ENCODE measurements at regions of chr6 and their contacts with region 1.

Region 1: GRCh38 chr6:143427109-143427817 is 23.2 kb downstream of the ADAT2 start:
- DNase-seq: peak; percentile 39 to 82 (median 72)
- ATAC-seq: peak; percentile 96 to 100 (median 99)
- H3K4me3 ChIP-seq: no peak overlapping the region
- H3K4me3 Mint-ChIP-seq: no peak overlapping the region
- H3K27ac ChIP-seq: no peak overlapping the region
- H3K27ac Mint-ChIP-seq: no peak overlapping the region
- H3K4me1 ChIP-seq: no peaks in the 10 kb centered on the region
- H3K4me1 Mint-ChIP-seq: peaks cover 2 to 5% (median 3%) of the 10 kb centered on the region in 3 donors
- H3K27me3 ChIP-seq: no peaks in the 10 kb centered on the region
- H3K27me3 Mint-ChIP-seq: no peaks in the 10 kb centered on the region

Region 2: DNA sequence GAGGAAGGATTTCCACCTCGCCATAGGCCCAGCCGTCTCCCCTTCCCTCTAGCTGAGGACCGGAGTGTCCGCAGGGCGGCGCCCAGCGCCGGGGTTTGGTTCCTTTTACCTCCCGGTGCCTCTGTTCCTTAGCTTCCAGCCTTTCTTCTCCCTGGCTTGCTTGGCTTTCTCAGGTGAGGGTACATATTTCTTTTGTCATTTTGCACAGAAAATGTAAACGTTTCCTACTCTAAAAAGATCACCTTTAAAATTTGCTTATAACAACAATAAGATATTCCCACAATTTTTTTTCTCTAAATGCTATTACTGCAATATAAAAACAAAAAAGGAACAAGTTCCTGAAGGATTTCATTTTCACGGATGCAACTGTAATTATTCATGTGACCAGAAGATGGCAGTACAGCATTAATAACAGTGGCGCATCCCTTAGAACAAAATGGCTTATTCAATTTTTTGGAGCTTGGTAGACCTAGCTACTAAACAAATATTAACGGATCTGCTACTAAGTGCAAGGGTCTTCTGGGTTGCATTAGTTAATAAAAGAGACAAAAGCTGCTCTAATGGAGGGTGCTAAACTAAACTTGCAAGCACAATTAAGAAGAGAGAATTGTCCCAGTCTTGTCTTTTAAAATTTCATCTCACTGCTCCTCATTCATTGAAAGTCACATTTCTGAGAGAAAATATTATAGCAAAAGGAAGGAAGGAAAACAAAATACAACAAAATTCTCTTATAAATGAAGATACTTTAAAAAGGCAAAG is 952.6 kb before region 1 on chr6:
- CTCF ChIA-PET with region 1: interaction called, 17 to 37 read pairs
- POLR2A ChIA-PET with region 1: no interaction called
- DNase-seq: peak in 2 of 35 experiments; percentile 15 to 72
- ATAC-seq: no peak
- H3K4me3 ChIP-seq: no peak overlapping the region
- H3K4me3 Mint-ChIP-seq: no peak overlapping the region
- H3K27ac ChIP-seq: no peak overlapping the region
- H3K27ac Mint-ChIP-seq: no peak overlapping the region
- H3K4me1 ChIP-seq: no peaks in the 10 kb centered on the region
- H3K4me1 Mint-ChIP-seq: peaks cover 5 to 8% (median 8%) of the 10 kb centered on the region in 3 donors
- H3K27me3 ChIP-seq: peaks cover 0 to 2% of the 10 kb centered on the region in 2 experiments
- H3K27me3 Mint-ChIP-seq: peaks cover 0 to 5% of the 10 kb centered on the region in 2 donors

Region 3: GRCh38 chr6:142692942-142693341 is 734.3 kb before region 1 on chr6:
- CTCF ChIA-PET with region 1: interaction called, 11 to 15 read pairs
- POLR2A ChIA-PET with region 1: interaction called in 1 of 2 experiments, 6 read pairs
- DNase-seq: peak; percentile 15 to 82 (median 58)
- ATAC-seq: peak; percentile 72 to 81 (median 78)
- H3K4me3 ChIP-seq: no peak overlapping the region
- H3K4me3 Mint-ChIP-seq: peak overlapping the region in 1 of 3 donors; percentile 2
- H3K27ac ChIP-seq: no peak overlapping the region
- H3K27ac Mint-ChIP-seq: no peak overlapping the region
- H3K4me1 ChIP-seq: peaks cover 4 to 14% of the 10 kb centered on the region in 2 experiments
- H3K4me1 Mint-ChIP-seq: peaks cover 16 to 21% (median 16%) of the 10 kb centered on the region in 3 donors
- H3K27me3 ChIP-seq: no peaks in the 10 kb centered on the region
- H3K27me3 Mint-ChIP-seq: no peaks in the 10 kb centered on the region

Region 4: DNA sequence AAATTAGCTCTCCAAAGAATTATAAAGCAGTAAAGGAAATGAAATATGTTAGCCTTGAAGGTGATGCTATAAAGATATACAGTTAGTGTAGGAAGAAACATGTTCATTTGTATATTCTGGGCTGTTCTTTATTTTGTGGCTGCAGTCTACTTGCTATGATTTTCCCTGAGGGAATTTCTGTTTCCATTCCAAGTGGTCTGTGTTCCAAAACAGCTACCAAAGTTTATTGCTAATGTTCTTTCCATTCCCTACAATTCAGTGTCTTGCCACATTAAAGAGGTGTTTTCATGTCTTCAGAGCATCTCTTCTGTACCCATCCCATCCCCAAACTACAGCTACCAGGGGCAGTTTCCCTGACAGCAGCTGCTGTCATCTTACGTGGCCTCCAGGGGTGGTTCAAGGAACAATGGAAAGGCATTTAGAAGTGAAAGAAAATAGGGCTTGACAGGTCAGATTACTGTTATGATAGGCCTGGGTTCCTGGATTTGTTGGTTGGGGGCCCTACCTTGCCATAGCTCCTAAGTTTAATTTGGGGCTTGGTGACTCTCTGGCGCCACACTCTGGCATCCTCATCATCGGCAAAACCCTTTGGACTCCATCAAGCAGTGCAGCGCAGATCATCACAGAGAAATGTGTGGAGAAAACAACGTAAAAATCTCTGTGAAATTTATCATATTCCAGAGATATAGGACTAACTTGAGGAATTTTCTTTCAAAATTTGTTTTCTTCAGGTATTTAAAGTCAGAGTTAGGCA is 400.4 kb before region 1 on chr6:
- CTCF ChIA-PET with region 1: interaction called in 1 of 2 experiments, 12 read pairs
- POLR2A ChIA-PET with region 1: no interaction called
- DNase-seq: peak in 32 of 35 experiments; percentile 10 to 70 (median 40)
- ATAC-seq: peak in 3 of 4 experiments; percentile 51 to 62 (median 59)
- H3K4me3 ChIP-seq: no peak overlapping the region
- H3K4me3 Mint-ChIP-seq: no peak overlapping the region
- H3K27ac ChIP-seq: no peak overlapping the region
- H3K27ac Mint-ChIP-seq: peak overlapping the region in 1 of 2 donors; percentile 50
- H3K4me1 ChIP-seq: no peaks in the 10 kb centered on the region
- H3K4me1 Mint-ChIP-seq: peaks cover 0 to 4% (median 0%) of the 10 kb centered on the region in 3 donors
- H3K27me3 ChIP-seq: no peaks in the 10 kb centered on the region
- H3K27me3 Mint-ChIP-seq: peaks cover 0 to 3% of the 10 kb centered on the region in 2 donors

Region 5: GRCh38 chr6:143390278-143390677 is 37.0 kb before region 1 on chr6:
- CTCF ChIA-PET with region 1: no interaction called
- POLR2A ChIA-PET with region 1: no interaction called
- DNase-seq: no peak
- ATAC-seq: no peak
- H3K4me3 ChIP-seq: no peak overlapping the region
- H3K4me3 Mint-ChIP-seq: no peak overlapping the region
- H3K27ac ChIP-seq: no peak overlapping the region
- H3K27ac Mint-ChIP-seq: no peak overlapping the region
- H3K4me1 ChIP-seq: no peaks in the 10 kb centered on the region
- H3K4me1 Mint-ChIP-seq: no peaks in the 10 kb centered on the region
- H3K27me3 ChIP-seq: no peaks in the 10 kb centered on the region
- H3K27me3 Mint-ChIP-seq: no peaks in the 10 kb centered on the region

Region 6: DNA sequence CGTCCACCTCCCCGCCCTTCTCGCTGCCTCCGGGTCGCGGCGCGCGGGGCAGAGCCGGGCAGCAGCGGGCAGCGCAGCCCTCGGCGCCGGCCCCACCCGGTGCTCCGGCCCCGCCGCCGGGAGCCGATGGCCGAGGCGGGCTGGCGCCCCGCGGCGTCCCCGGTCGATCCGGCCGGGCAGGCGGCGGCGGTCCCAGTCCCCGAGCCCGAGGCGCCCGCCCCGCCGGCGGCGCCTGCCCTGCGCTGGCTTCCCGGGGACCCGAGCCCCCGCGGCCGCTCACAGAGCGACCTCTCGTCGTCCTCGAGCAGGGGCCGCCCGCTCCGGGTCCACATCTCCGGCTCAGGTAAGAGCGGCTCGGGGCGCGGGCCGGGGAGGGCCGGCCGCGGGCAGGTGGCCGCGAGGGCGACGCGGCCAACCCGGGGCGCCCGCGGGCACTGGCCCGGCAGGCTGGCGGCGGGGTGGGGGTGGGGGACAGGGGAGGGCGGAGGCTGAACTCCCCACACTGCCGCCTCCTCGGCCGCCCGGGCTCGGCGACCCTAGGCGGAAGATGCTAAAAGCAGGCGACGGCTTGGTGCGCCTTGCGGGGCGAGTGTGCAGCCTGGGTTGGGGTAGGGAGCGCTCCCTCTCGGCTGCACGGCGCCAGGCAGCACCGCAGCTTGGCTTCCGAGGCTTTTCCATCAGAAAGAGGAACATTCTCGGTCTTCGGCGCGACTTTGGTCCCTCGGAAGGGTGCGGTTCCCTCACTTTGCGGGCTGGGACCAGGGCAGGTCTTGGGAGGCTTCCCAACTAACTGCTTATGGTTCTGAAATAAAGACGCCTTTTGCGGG is 109.8 kb after region 1 on chr6:
- CTCF ChIA-PET with region 1: no interaction called
- POLR2A ChIA-PET with region 1: no interaction called
- DNase-seq: peak in 34 of 35 experiments; percentile 28 to 76 (median 48)
- ATAC-seq: peak; percentile 69 to 82 (median 73)
- H3K4me3 ChIP-seq: peak overlapping the region; percentile 73 to 83
- H3K4me3 Mint-ChIP-seq: peak overlapping the region; percentile 81 to 89 (median 84)
- H3K27ac ChIP-seq: peak overlapping the region; percentile 79
- H3K27ac Mint-ChIP-seq: peak overlapping the region; percentile 86 to 92
- H3K4me1 ChIP-seq: peaks cover 0 to 51% of the 10 kb centered on the region in 2 experiments
- H3K4me1 Mint-ChIP-seq: peaks cover 40 to 59% (median 45%) of the 10 kb centered on the region in 3 donors
- H3K27me3 ChIP-seq: no peaks in the 10 kb centered on the region
- H3K27me3 Mint-ChIP-seq: no peaks in the 10 kb centered on the region

Measured in T-cell (primary cell).